Heart left ventricle (tissue), 16 donors: ENCODE measurements at regions of chr13 and their contacts with region 1.

Region 1: DNA sequence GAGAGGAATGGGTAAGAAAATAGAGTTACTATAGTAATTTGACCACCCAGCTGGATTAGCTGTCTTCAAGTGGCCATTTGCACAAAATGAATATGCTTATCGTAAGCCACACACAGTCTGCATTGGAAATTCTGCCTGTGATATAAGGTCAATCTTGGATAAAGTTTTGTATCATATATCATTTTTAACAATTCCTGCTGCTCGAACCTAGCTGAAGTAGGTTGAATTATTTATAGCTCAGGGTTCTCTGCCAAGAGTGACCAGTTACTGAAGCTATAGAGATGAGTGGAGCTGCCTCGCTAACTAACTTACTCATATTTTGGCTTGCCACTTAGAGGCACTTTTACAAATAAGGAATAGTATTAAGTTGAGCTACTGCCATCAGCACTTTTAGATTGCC is 220.9 kb downstream of the RGCC start:
- DNase-seq: no peak
- ATAC-seq: peak in 3 of 4 donors; percentile 48 to 70 (median 68)
- H3K4me3 ChIP-seq: no peak overlapping the region
- H3K27ac ChIP-seq: peak overlapping the region in 6 of 12 donors; percentile 2 to 55 (median 47)
- H3K4me1 ChIP-seq: peaks cover 0 to 28% (median 13%) of the 10 kb centered on the region in 12 donors
- H3K27me3 ChIP-seq: no peaks in the 10 kb centered on the region
- CTCF ChIP-seq: no peak
- POLR2A ChIP-seq: no peak

Region 2: GRCh38 chr13:41512441-41512840 is 165.8 kb before region 1 on chr13:
- intact Hi-C with region 1: no loop called
- DNase-seq: no peak
- ATAC-seq: no peak
- H3K4me3 ChIP-seq: no peak overlapping the region
- H3K27ac ChIP-seq: no peak overlapping the region
- H3K4me1 ChIP-seq: no peaks in the 10 kb centered on the region
- H3K27me3 ChIP-seq: no peaks in the 10 kb centered on the region
- CTCF ChIP-seq: no peak
- POLR2A ChIP-seq: no peak

Region 3: DNA sequence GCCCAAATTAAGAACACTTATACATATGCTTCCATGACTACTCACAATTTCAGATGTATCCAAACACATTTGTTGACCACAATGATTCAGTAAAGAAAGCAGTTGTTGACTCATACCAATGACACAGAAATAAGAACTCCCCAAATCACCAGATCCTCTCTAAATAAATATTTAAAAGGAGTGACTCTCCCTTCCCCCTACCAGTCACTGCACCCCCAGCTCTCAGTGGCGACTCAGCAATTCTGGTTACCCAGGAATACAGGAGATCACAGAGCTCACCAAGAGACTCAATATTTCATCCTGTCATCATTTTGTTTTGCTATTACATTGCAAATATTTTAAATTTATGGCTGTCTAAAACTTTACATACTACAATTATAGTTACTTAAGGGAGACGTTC is 89.3 kb before region 1 on chr13:
- intact Hi-C with region 1: no loop called
- DNase-seq: no peak
- ATAC-seq: no peak
- H3K4me3 ChIP-seq: no peak overlapping the region
- H3K27ac ChIP-seq: no peak overlapping the region
- H3K4me1 ChIP-seq: peaks cover 0 to 9% (median 0%) of the 10 kb centered on the region in 12 donors
- H3K27me3 ChIP-seq: no peaks in the 10 kb centered on the region
- CTCF ChIP-seq: no peak
- POLR2A ChIP-seq: no peak

Region 4: GRCh38 chr13:41603917-41604316 is 74.3 kb before region 1 on chr13:
- intact Hi-C with region 1: no loop called
- DNase-seq: peak in 1 of 5 donors; percentile 38
- ATAC-seq: peak in 2 of 4 donors; percentile 49 to 56
- H3K4me3 ChIP-seq: no peak overlapping the region
- H3K27ac ChIP-seq: no peak overlapping the region
- H3K4me1 ChIP-seq: no peaks in the 10 kb centered on the region
- H3K27me3 ChIP-seq: no peaks in the 10 kb centered on the region
- CTCF ChIP-seq: no peak
- POLR2A ChIP-seq: no peak

Region 5: GRCh38 chr13:41622432-41623429 is 55.5 kb before region 1 on chr13:
- intact Hi-C with region 1: no loop called
- DNase-seq: no peak
- ATAC-seq: peak; percentile 68 to 84 (median 82)
- H3K4me3 ChIP-seq: no peak overlapping the region
- H3K27ac ChIP-seq: peak overlapping the region; percentile 6 to 87 (median 66)
- H3K4me1 ChIP-seq: peaks cover 0 to 27% (median 20%) of the 10 kb centered on the region in 12 donors
- H3K27me3 ChIP-seq: no peaks in the 10 kb centered on the region
- CTCF ChIP-seq: no peak
- POLR2A ChIP-seq: no peak

Region 6: DNA sequence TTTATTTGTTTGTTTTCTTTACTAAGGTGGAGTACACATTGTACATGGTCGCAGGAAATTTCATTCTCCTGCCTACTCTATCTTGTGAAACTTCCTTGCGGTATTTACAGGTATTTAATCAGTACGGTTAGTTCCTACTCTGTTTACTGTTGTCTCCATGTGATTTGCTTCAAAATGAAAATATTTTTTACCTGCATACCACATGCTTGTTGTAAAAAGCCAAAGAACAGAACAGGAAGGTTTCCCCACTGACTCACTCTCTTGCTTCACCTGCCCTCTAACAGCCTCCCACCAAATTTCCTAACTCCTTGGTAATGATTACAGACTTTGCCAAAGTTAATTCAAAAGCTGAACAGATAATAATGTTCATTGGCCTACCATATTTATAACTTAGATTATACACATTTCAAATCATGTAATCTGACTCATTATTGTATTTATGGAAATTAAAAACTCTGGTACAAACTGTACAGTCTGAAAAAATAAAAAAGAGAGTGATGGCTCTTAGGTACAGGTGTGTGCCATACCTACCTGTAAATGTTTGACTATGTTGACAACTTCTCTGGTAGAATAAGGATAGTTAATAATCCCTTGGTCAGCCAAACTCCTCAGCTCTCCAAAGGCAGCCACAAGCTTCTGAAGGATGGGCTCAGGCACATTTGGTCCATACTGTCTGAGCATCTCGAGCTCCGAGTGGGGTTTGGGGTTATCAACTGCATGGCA is 42.8 kb after region 1 on chr13:
- intact Hi-C with region 1: loop called in 1 of 10 experiments (anchors 5 kb)
- DNase-seq: no peak
- ATAC-seq: no peak
- H3K4me3 ChIP-seq: no peak overlapping the region
- H3K27ac ChIP-seq: no peak overlapping the region
- H3K4me1 ChIP-seq: peaks cover 0 to 7% (median 0%) of the 10 kb centered on the region in 12 donors
- H3K27me3 ChIP-seq: no peaks in the 10 kb centered on the region
- CTCF ChIP-seq: no peak
- POLR2A ChIP-seq: no peak

Region 7: GRCh38 chr13:41742917-41743552 is 64.8 kb after region 1 on chr13:
- intact Hi-C with region 1: loop called in 1 of 10 experiments (anchors 10 kb)
- DNase-seq: no peak
- ATAC-seq: peak in 3 of 4 donors; percentile 41 to 71 (median 64)
- H3K4me3 ChIP-seq: no peak overlapping the region
- H3K27ac ChIP-seq: peak overlapping the region in 3 of 12 donors; percentile 18 to 44 (median 43)
- H3K4me1 ChIP-seq: peaks cover 0 to 26% (median 8%) of the 10 kb centered on the region in 12 donors
- H3K27me3 ChIP-seq: no peaks in the 10 kb centered on the region
- CTCF ChIP-seq: no peak
- POLR2A ChIP-seq: no peak

Region 8: GRCh38 chr13:41848435-41849255 is 170.4 kb after region 1 on chr13:
- intact Hi-C with region 1: loop called in 1 of 10 experiments (anchors 10 kb)
- DNase-seq: no peak
- ATAC-seq: peak; percentile 39 to 74 (median 71)
- H3K4me3 ChIP-seq: no peak overlapping the region
- H3K27ac ChIP-seq: peak overlapping the region in 7 of 12 donors; percentile 4 to 56 (median 24)
- H3K4me1 ChIP-seq: peaks cover 0 to 19% (median 5%) of the 10 kb centered on the region in 12 donors
- H3K27me3 ChIP-seq: no peaks in the 10 kb centered on the region
- CTCF ChIP-seq: peak in 6 of 12 donors; percentile 19 to 46 (median 32)
- POLR2A ChIP-seq: no peak

Region 9: DNA sequence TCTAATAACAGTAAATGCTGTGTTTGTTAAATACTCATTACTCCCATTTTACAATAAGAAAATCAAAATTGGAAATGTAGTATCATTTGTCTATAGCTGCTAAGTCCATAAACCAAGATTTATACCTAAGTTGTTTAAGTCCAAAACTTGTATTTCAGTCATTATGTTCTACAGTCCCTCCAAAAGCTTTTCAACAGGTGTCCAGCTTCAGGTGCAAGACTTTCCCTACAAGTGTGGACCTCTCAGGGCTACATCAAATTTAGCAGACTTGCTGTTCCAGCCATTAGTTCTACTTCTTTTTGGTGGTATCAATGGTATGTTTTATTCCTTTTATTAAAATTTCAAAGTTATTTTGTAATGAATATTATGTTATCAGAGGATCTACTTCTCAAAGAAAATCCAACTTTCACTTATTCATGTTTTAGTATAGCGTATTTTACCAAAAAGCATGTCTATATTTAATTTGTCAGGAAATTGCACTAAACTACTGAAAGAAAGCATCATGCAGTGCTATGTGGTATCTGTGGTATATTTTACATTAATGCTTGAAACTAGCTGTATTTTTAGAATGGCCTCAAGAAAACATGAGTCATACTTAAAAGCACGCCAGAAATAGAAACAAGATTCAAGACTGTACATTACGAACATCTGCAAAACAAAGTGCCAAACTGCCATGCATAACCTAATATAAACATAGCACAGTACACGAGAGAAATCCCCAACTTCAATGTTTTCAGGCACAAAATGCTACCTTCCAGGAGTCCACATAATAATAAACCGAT is 238.1 kb after region 1 on chr13:
- intact Hi-C with region 1: loop called in 1 of 10 experiments (anchors 10 kb)
- DNase-seq: no peak
- ATAC-seq: peak in 3 of 4 donors; percentile 39 to 58 (median 50)
- H3K4me3 ChIP-seq: peak overlapping the region in 3 of 12 donors; percentile 8 to 12 (median 10)
- H3K27ac ChIP-seq: peak overlapping the region in 11 of 12 donors; percentile 10 to 63 (median 55)
- H3K4me1 ChIP-seq: peaks cover 3 to 68% (median 48%) of the 10 kb centered on the region in 12 donors
- H3K27me3 ChIP-seq: no peaks in the 10 kb centered on the region
- CTCF ChIP-seq: no peak
- POLR2A ChIP-seq: no peak